A549 (cell line): ENCODE measurements at regions of chr6 and their contacts with region 1.

Region 1: DNA sequence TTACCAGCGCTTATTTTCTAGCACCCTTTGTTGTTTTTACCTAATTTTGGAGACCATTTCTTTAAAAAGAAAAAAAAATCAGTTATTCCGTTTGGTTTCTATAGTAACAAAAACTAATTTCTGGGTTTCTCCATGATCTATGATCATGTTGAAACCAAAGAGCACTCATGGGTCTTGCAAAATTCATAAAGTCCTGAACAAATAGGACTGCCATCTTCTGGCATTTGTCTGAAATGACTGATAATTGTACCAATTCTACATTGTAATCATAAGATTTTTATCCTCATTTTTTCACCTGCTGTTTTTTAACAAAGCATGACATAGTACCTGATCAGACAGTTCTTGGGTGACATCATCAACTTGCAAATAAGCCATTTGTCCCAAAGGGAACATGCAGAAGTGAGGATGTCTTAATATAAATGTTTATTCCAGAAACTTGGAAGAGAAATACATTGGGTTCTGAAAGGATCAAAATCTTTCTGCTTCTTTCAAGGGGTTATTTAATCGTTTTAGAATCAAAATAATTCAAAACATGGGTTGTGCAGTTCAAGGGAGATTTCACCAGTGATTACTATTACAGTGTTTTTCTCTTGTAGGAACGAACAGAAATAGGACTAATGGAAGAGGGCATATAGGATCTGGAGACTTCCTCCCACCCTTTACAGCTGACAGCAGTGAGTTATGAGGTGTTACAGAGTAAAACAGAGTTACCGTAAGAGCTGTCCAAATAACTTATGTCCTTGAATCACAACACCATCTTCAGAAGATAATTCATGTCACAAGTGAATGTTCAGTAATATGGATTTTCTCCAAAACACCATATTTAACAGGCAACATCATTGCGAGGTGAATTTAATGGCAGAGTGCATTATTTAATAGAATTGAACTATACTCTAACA is 87.1 kb upstream of the GJE1 start:
- DNase-seq: peak in 1 of 2 experiments; percentile 15
- ATAC-seq: no peak
- H3K4me3 ChIP-seq: no peak overlapping the region
- H3K27ac ChIP-seq: no peak overlapping the region
- H3K4me1 ChIP-seq: no peaks in the 10 kb centered on the region
- CTCF ChIP-seq: peak; percentile 48
- EP300 ChIP-seq: no peak
- POLR2A ChIP-seq: no peak
- RAD21 ChIP-seq: peak; percentile 41 to 42; a peak in 3 of 5 replicates

Region 2: GRCh38 chr6:141988954-141989705 is 56.5 kb before region 1 on chr6:
- CTCF ChIA-PET with region 1: interaction called, 28 read pairs
- POLR2A ChIA-PET with region 1: no interaction called
- DNase-seq: peak; percentile 20 to 61
- ATAC-seq: peak in 1 of 2 experiments; percentile 66; a peak in 4 of 6 replicates
- H3K4me3 ChIP-seq: no peak overlapping the region
- H3K27ac ChIP-seq: no peak overlapping the region
- H3K4me1 ChIP-seq: no peaks in the 10 kb centered on the region
- CTCF ChIP-seq: peak; percentile 66
- EP300 ChIP-seq: no peak
- POLR2A ChIP-seq: no peak
- RAD21 ChIP-seq: peak; percentile 83 to 87

Region 3: DNA sequence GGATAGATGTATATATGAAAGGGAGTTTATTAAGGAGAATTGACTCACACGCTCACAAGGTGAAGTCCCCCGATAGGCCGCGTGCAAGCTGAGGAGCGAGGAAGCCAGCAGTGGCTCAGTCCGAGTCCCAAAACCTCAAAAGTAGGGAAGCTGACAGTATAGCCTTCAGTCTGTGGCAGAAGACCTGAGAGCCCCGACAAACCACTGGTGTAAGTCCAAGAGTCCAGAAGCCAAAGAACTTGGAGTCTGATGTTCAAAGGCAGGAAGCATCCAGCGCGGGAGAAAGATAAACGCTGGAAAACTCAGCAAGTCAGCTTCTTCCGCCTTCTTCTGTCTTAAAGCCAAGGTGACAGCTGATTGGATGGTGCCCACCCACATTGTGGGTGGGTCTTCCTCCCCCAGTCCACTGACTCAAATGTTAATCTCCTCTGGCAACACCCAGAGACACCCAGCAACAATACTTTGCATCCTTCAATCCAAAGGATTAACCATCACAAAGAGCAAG is 15.5 kb before region 1 on chr6:
- CTCF ChIA-PET with region 1: no interaction called
- POLR2A ChIA-PET with region 1: no interaction called
- DNase-seq: no peak
- ATAC-seq: no peak
- H3K4me3 ChIP-seq: no peak overlapping the region
- H3K27ac ChIP-seq: no peak overlapping the region
- H3K4me1 ChIP-seq: no peaks in the 10 kb centered on the region
- CTCF ChIP-seq: no peak
- EP300 ChIP-seq: no peak
- POLR2A ChIP-seq: no peak
- RAD21 ChIP-seq: no peak